ENCODE measurements at regions of chr6 and their contacts with region 1.

Region 1: GRCh38 chr6:43143235-43144124 is 27.6 kb upstream of the SRF start:
- DNase-seq: peak; percentile 89 to 96
- H3K4me3 ChIP-seq: no peak overlapping the region; a peak in 1 of 8 replicates
- H3K27ac ChIP-seq: no peak overlapping the region
- H3K4me1 ChIP-seq: peaks cover 0 to 6% (median 3%) of the 10 kb centered on the region in 4 experiments; a peak in 3 of 7 replicates
- H3K27me3 ChIP-seq: no peaks in the 10 kb centered on the region
- CTCF ChIP-seq: peak; percentile 92 to 99 (median 98)
- EP300 ChIP-seq: no peak; a peak in 1 of 3 replicates
- POLR2A ChIP-seq: 0 out of 3 replicates have a peak, but pooled peaks of 1 of the 2 experiments have one; percentile 36
- RAD21 ChIP-seq: peak; percentile 99 to 100

Region 2: DNA sequence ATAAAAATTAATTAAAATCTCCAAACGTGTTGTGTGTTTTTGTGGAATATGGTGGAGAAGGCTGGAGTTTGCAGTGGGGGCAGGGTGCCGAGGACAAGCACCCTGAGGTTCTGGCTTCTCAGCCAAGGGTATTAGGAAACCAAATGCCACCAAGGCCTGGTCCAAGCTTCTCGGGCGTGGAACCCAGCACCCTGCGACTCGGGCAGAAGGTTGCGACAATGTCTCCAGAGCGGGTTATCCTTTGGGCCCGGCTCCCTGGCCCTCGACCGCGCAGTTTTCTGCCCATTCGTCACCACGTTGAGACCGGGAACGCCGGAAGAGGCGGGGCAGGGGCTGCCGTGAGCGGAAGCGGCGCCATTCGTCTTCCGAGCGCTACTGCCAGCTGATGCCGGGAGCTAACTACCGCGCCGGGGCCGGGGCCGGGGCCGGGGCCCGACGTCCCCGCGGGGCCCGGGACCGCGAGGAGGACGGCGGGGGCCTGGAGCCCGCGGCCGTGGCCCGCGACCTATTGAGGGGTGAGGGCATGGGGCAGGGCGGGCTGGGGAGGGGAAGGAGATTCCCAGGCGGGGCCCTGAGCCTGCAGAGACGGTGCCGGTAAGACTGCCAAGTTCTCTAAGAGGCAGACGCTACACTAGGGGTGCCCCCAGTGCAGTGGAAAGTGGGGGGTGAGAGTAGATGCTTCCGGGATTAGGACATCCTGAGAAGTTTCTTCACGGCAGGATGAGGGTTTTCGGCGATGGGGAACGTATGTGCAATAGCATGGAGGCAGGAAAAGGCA is 122.0 kb before region 1 on chr6 and contains the start of gene RRP36:
- CTCF ChIA-PET with region 1: interaction called, 22 read pairs
- POLR2A ChIA-PET with region 1: interaction called, 3 read pairs
- DNase-seq: peak in 1 of 2 experiments; percentile 84
- H3K4me3 ChIP-seq: peak within 1 kb of the TSS; percentile 93 to 99 (median 96)
- H3K27ac ChIP-seq: peak within 1 kb of the TSS; percentile 81
- H3K4me1 ChIP-seq: peaks cover 0 to 5% (median 1%) of the 10 kb centered on the region in 4 experiments; a peak in 3 of 7 replicates
- H3K27me3 ChIP-seq: no peaks in the 10 kb centered on the region
- CTCF ChIP-seq: no peak
- EP300 ChIP-seq: no peak
- POLR2A ChIP-seq: peak in 1 of 2 experiments; percentile 42; a peak in 1 of 3 replicates
- RAD21 ChIP-seq: 0 out of 4 replicates have a peak, but pooled peaks of 1 of the 2 experiments have one; percentile 1
- total RNA-seq, gene RRP36: 89.6 and 92.3 TPM in 2 replicates

Region 3: DNA sequence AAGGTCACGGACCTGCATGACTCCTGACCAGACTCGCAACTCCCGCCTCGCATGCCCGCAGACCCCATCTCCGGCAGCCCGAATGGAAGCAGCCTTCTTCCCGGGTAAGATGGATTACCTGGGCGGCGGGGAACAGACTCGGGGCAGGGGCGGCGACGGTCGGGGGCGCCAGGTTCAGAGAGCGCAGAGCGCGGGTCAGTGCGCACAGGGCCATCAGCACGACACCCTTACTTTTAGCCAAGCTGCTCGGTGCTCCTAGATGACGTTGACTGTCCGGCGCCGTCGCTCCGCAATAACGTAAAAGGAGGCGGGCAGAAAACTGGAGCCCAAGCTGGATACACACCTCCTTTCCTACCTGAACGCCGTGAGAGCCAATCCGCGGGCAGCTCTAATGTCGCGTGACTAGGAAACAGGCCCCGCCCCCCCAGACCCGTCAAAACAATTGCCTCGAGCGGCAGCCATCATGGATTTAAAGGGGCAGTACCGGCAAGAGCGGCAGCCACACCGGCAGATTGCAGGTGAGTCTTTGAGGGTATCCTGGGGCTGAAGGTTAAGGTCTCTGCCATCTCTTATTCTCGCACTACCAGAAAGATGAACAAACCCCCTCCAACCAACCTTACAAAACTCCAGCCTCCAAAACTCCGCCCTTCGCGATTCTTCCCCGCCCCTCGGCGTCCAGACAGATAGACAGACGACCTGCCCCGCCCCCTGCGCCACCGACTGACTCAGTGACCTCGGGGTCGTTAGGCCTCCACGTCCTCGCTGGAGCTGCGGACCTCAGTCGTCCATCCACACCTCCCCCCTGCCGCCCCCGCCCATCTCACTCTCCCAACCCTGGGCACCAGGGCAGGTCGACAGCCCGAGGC is 84.1 kb before region 1 on chr6 and contains the starts of genes KLC4 and MRPL2:
- CTCF ChIA-PET with region 1: interaction called, 30 read pairs
- POLR2A ChIA-PET with region 1: interaction called, 10 read pairs
- DNase-seq: peak; percentile 94 to 99
- H3K4me3 ChIP-seq: peak within 1 kb of the TSS; percentile 90 to 99 (median 98)
- H3K27ac ChIP-seq: peak within 1 kb of the TSS; percentile 89
- H3K4me1 ChIP-seq: peaks cover 4 to 10% (median 5%) of the 10 kb centered on the region in 4 experiments; a peak in 5 of 7 replicates
- H3K27me3 ChIP-seq: no peaks in the 10 kb centered on the region
- CTCF ChIP-seq: no peak
- EP300 ChIP-seq: 0 out of 3 replicates have a peak, but pooled peaks of 1 of the 2 experiments have one; percentile 10
- POLR2A ChIP-seq: peak in 1 of 2 experiments; percentile 98; a peak in 2 of 3 replicates
- RAD21 ChIP-seq: 0 out of 4 replicates have a peak, but pooled peaks of 1 of the 2 experiments have one; percentile 8
- total RNA-seq, gene KLC4: 27.7 and 28.5 TPM in 2 replicates
- total RNA-seq, gene MRPL2: 97.7 and 99.9 TPM in 2 replicates

Region 4: GRCh38 chr6:43075670-43076463 is 67.6 kb before region 1 on chr6 and contains the start of gene PTK7:
- CTCF ChIA-PET with region 1: interaction called, 40 read pairs
- POLR2A ChIA-PET with region 1: interaction called, 30 read pairs
- DNase-seq: peak in 1 of 2 experiments; percentile 88
- H3K4me3 ChIP-seq: peak within 1 kb of the TSS; percentile 84 to 95 (median 94)
- H3K27ac ChIP-seq: peak within 1 kb of the TSS; percentile 77; the same call in 1 of the 2 replicates
- H3K4me1 ChIP-seq: peaks cover 6 to 17% (median 12%) of the 10 kb centered on the region in 4 experiments; a peak in 6 of 7 replicates
- H3K27me3 ChIP-seq: 0 out of 7 replicates have a peak, but pooled peaks cover 0 to 2% (median 0%) of the 10 kb centered on the region in 4 experiments
- CTCF ChIP-seq: no peak
- EP300 ChIP-seq: no peak; a peak in 1 of 3 replicates
- POLR2A ChIP-seq: no peak; a peak in 1 of 3 replicates
- RAD21 ChIP-seq: no peak
- total RNA-seq, gene PTK7: 130 and 138 TPM in 2 replicates

Region 5: GRCh38 chr6:43120944-43121913 is 22.3 kb before region 1 on chr6:
- CTCF ChIA-PET with region 1: interaction called, 27 read pairs
- POLR2A ChIA-PET with region 1: no interaction called
- DNase-seq: no peak
- H3K4me3 ChIP-seq: no peak overlapping the region
- H3K27ac ChIP-seq: no peak overlapping the region
- H3K4me1 ChIP-seq: peaks cover 2 to 17% (median 9%) of the 10 kb centered on the region in 4 experiments
- H3K27me3 ChIP-seq: no peaks in the 10 kb centered on the region
- CTCF ChIP-seq: no peak
- EP300 ChIP-seq: no peak
- POLR2A ChIP-seq: no peak
- RAD21 ChIP-seq: peak in 1 of 2 experiments; percentile 11; a peak in 1 of 4 replicates

Region 6: GRCh38 chr6:43211955-43212354 is 68.5 kb after region 1 on chr6:
- CTCF ChIA-PET with region 1: no interaction called
- POLR2A ChIA-PET with region 1: no interaction called
- DNase-seq: no peak
- H3K4me3 ChIP-seq: no peak overlapping the region
- H3K27ac ChIP-seq: no peak overlapping the region
- H3K4me1 ChIP-seq: no peaks in the 10 kb centered on the region; a peak in 1 of 7 replicates
- H3K27me3 ChIP-seq: no peaks in the 10 kb centered on the region
- CTCF ChIP-seq: peak in 1 of 3 experiments; percentile 43; a peak in 1 of 4 replicates
- EP300 ChIP-seq: no peak
- POLR2A ChIP-seq: no peak
- RAD21 ChIP-seq: peak; percentile 27 to 42; a peak in 2 of 4 replicates

Region 7: DNA sequence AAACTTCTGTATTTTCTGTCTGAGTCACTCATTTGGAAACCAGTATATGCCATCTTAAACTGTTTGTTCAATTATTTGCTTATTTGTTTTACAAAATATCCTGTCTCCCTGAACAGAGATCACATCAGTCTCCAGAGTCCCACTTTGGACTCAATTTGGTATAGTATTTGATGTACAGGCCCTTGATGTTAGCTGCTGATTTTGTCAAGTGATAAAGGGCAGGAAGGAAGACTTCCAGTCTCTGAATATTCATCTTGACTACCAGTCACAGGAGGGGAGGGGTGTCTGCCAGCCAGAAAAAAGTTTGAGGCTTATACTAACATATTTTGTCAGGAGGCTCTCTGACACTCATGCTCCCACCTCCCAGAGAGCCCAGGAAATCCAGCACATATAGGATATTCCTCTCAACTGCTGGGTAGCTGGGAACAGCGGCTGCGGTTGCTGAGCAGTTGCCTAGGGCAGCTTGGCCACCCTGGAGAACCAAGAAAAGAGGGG is 1807.8 kb after region 1 on chr6:
- CTCF ChIA-PET with region 1: no interaction called
- POLR2A ChIA-PET with region 1: no interaction called
- DNase-seq: no peak
- H3K4me3 ChIP-seq: no peak overlapping the region
- H3K27ac ChIP-seq: no peak overlapping the region
- H3K4me1 ChIP-seq: no peaks in the 10 kb centered on the region
- H3K27me3 ChIP-seq: no peaks in the 10 kb centered on the region
- CTCF ChIP-seq: no peak
- EP300 ChIP-seq: no peak
- POLR2A ChIP-seq: no peak
- RAD21 ChIP-seq: no peak